AG04449 (cell line): ENCODE measurements at regions of chr1 and their contacts with region 1.

Region 1: GRCh38 chr1:43934101-43934985 is 742 bp downstream of the ARTN start:
- DNase-seq: no peak
- H3K4me3 ChIP-seq: no peak overlapping the region
- CTCF ChIP-seq: peak; percentile 94

Region 2: GRCh38 chr1:43706598-43707495 is 227.5 kb before region 1 on chr1:
- CTCF ChIA-PET with region 1: interaction called, 37 read pairs
- POLR2A ChIA-PET with region 1: no interaction called
- DNase-seq: no peak
- H3K4me3 ChIP-seq: peak overlapping the region; percentile 88
- CTCF ChIP-seq: no peak

Region 3: GRCh38 chr1:43796111-43796581 is 138.2 kb before region 1 on chr1:
- CTCF ChIA-PET with region 1: interaction called, 23 read pairs
- POLR2A ChIA-PET with region 1: no interaction called
- DNase-seq: no peak
- H3K4me3 ChIP-seq: peak overlapping the region; percentile 21; the same call in 1 of the 2 replicates
- CTCF ChIP-seq: no peak

Region 4: DNA sequence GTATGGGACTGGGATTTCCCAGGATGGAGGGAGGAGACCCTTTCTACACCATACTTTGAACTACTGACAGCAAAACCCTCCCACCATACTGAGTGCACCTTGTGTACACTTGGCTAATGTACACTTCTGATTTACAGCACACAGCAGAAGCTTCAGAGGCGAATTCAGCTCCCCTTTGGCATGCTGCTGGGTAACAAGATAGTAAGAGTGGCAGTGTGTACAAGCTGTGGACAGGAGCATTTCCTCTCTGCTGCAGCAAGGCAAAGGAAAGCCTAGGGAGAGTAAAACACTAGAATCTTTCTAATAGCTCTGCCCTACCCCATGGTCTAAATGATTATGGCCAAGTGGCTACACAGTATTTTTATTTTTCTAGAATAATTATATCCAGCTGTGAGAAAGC is 84.7 kb before region 1 on chr1:
- CTCF ChIA-PET with region 1: interaction called, 12 read pairs
- POLR2A ChIA-PET with region 1: no interaction called
- DNase-seq: no peak
- H3K4me3 ChIP-seq: no peak overlapping the region
- CTCF ChIP-seq: no peak

Region 5: GRCh38 chr1:43898136-43898535 is 36.2 kb before region 1 on chr1:
- CTCF ChIA-PET with region 1: interaction called, 26 read pairs
- POLR2A ChIA-PET with region 1: no interaction called
- DNase-seq: no peak
- H3K4me3 ChIP-seq: no peak overlapping the region
- CTCF ChIP-seq: no peak

Region 6: DNA sequence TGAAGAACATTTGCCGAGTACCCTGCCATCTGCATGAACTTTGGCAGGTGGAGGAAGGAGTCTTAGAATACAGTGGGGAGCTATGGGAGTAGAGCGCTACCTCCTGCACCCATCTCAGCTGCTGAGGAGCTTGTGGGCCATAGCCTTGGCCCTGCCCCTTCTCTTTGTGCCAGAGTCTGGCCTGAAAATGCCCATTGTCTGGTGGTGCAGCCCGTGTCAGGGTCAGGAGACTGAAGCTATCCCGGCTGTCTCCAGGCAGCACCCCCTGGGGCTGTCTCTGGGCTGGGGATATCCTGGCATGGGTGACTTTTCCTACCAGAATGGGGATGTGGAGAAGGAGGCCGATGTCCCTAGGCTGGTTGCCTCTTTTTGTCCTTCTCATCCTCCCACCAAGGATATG is 19.7 kb after region 1 on chr1:
- CTCF ChIA-PET with region 1: interaction called, 167 read pairs
- POLR2A ChIA-PET with region 1: no interaction called
- DNase-seq: no peak
- H3K4me3 ChIP-seq: no peak overlapping the region
- CTCF ChIP-seq: no peak

Region 7: GRCh38 chr1:44049839-44050238 is 115.5 kb after region 1 on chr1:
- CTCF ChIA-PET with region 1: interaction called, 29 read pairs
- POLR2A ChIA-PET with region 1: no interaction called
- DNase-seq: peak; percentile 91
- H3K4me3 ChIP-seq: no peak overlapping the region
- CTCF ChIP-seq: no peak

Region 8: DNA sequence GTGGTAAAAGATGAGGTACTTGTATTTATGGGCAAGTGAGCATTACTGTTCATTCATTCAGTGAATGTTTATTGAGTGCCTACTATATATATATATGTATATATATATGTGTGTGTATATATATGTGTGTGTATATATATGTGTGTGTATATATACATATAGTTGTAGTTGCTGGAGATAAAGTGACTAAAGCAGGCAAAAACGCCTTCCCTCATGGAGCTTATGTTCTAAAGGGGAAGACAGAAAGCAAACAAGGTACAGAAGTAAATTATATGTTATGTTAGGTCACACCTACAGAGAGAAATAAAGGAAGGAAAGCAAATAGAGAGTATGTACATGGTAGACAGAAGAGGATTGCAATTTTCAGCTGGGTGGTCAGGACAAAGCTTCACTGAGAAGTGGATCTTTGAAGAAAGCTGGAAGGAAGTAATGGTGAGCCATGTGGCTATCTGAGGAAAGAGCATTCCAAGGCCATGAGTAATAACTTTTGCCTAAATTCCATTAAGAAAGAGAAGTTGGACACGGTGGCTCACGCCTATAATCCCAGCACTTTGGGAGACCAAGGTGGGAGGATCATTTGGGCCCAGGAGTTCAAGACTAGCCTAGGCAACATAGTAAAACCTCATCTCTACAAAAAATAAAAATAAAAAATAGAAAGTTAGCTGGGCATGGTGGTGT is 150.8 kb after region 1 on chr1:
- CTCF ChIA-PET with region 1: no interaction called
- POLR2A ChIA-PET with region 1: no interaction called
- DNase-seq: peak; percentile 31
- H3K4me3 ChIP-seq: no peak overlapping the region
- CTCF ChIP-seq: no peak